ENCODE measurements at regions of chr11 and their contacts with region 1.

Region 1: DNA sequence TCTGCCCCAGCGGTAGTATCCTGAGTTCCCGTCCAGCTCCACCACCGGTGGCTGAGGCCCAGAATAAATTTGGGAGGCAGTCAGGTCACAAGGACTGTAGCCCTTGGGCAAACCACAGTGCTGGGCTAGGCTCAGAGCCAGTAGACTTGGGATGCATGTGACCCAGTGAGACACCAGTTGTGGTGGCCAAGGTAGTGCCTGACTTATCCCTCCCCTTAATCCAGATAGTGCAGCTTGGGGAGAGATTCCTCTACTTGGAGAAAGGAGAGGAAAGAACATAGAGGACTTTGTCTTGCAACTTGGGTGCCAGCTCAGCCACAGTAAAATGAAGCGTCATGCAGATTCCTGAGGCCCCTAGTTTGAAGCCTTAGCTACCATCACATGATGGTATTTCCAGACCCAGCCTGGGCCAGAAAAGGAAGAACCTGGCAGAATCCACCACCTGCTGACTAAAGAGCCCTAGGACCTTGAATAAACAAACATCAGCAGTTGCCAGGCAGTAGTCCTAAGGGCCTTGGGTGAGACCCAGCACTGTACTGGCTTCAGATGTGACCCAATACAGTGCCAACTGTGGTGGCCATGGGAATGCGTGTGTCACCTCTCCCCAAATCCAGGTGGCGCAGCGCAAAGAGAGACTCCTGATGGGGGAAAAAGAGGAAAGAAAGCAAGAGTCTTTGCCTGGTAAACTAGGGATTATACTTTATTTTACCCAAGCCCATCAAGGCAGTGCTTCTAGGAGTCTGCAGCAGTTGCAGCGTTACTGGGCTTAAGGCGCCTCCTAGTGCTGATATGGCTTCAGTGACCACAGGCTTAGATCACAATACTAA is 17.0 kb upstream of the DDX10 start:
- DNase-seq: peak in 2 of 3 donors; percentile 69 to 85
- ATAC-seq: peak; percentile 95
- H3K4me3 ChIP-seq: no peak overlapping the region
- H3K4me1 ChIP-seq: peaks cover 4% of the 10 kb centered on the region
- CTCF ChIP-seq: peak; percentile 56

Region 2: GRCh38 chr11:108414958-108415357 is 233.0 kb before region 1 on chr11:
- intact Hi-C with region 1: loop called in 1 of 2 experiments (anchors 10 kb)
- DNase-seq: no peak
- ATAC-seq: no peak
- H3K4me3 ChIP-seq: no peak overlapping the region
- H3K4me1 ChIP-seq: no peaks in the 10 kb centered on the region
- CTCF ChIP-seq: no peak

Region 3: GRCh38 chr11:108804511-108804910 is 156.6 kb after region 1 on chr11:
- intact Hi-C with region 1: no loop called
- DNase-seq: no peak
- ATAC-seq: no peak
- H3K4me3 ChIP-seq: no peak overlapping the region
- H3K4me1 ChIP-seq: no peaks in the 10 kb centered on the region
- CTCF ChIP-seq: no peak

Measured in mucosa of descending colon (tissue), 3 donors.